ENCODE measurements at regions of chr15 and their contacts with region 1.

Region 1: GRCh38 chr15:99565299-99566156 is at the start of gene MEF2A:
- DNase-seq: peak; percentile 86 to 94 (median 91)
- ATAC-seq: peak; percentile 86
- H3K4me3 ChIP-seq: peak within 1 kb of the TSS; percentile 100
- H3K4me3 Mint-ChIP-seq: peak within 1 kb of the TSS; percentile 96 to 100 (median 98)
- H3K27ac ChIP-seq: peak within 1 kb of the TSS; percentile 81
- H3K27ac Mint-ChIP-seq: peak within 1 kb of the TSS; percentile 93 to 99 (median 97)
- H3K4me1 ChIP-seq: peaks cover 8 to 24% of the 10 kb centered on the region in 2 donors
- H3K4me1 Mint-ChIP-seq: peaks cover 32 to 62% (median 55%) of the 10 kb centered on the region in 7 donors
- H3K27me3 ChIP-seq: no peaks in the 10 kb centered on the region
- H3K27me3 Mint-ChIP-seq: peaks cover 0 to 5% (median 0%) of the 10 kb centered on the region in 5 donors
- total RNA-seq, gene MEF2A: 24.2 to 42.8 (median 38.5) TPM

Region 2: DNA sequence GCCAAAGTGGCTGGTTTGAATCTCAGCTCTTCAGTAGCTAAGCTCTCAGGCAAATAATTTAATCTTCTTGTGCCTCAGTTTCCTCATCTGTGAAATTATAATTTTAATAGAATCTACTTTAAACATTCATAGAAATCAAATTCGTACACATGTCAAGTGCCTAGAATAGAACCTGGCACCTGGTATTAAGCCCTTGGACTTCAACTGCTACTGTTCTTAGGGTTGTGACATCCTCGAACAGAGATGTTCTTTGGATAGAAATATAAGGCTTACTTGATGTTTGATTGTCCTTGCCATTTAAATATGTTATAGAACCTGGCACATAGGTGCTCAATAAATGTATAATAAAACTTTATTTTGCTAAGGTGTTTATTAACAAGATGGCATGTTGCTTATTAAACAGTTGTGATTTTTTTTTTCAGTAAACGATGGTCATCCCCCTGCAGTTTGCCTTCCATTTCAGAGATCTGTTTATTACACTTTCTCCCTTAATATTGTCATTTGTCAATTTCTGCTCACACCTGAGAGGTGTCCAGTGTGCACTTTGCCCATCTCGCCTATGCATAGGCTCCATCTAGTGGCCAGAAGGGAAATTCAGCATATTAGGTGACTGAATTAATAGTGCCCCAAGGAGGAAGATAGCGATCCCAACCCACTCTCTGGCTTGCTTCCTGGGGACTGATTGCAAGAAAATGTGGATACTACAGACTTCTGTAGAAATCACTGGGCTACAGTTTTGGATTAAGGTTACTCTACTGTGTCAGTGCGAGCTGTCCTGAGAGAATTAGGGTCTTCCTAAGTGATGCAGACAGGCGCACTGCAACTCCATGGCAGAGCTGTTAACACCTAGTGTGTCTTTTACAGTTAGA is 906.5 kb before region 1 on chr15:
- CTCF ChIA-PET with region 1: no interaction called
- POLR2A ChIA-PET with region 1: no interaction called
- intact Hi-C with region 1: loop called in 1 of 2 experiments (anchors 10 kb)
- DNase-seq: peak in 7 of 9 donors; percentile 24 to 56 (median 49)
- ATAC-seq: peak; percentile 85
- H3K4me3 ChIP-seq: no peak overlapping the region
- H3K4me3 Mint-ChIP-seq: no peak overlapping the region
- H3K27ac ChIP-seq: no peak overlapping the region
- H3K27ac Mint-ChIP-seq: peak overlapping the region in 2 of 9 donors; percentile 43 to 73
- H3K4me1 ChIP-seq: peaks cover 0 to 23% of the 10 kb centered on the region in 2 donors
- H3K4me1 Mint-ChIP-seq: peaks cover 15 to 79% (median 71%) of the 10 kb centered on the region in 7 donors
- H3K27me3 ChIP-seq: no peaks in the 10 kb centered on the region
- H3K27me3 Mint-ChIP-seq: peaks cover 0 to 6% (median 0%) of the 10 kb centered on the region in 5 donors

Region 3: GRCh38 chr15:99343881-99344551 is 221.5 kb before region 1 on chr15:
- CTCF ChIA-PET with region 1: no interaction called
- POLR2A ChIA-PET with region 1: interaction called, 3 read pairs
- intact Hi-C with region 1: loop called in 1 of 2 experiments (anchors 5 kb)
- DNase-seq: peak; percentile 9 to 68 (median 57)
- ATAC-seq: peak; percentile 73
- H3K4me3 ChIP-seq: no peak overlapping the region
- H3K4me3 Mint-ChIP-seq: no peak overlapping the region
- H3K27ac ChIP-seq: no peak overlapping the region
- H3K27ac Mint-ChIP-seq: peak overlapping the region in 2 of 9 donors; percentile 8 to 61
- H3K4me1 ChIP-seq: no peaks in the 10 kb centered on the region
- H3K4me1 Mint-ChIP-seq: peaks cover 0 to 8% (median 6%) of the 10 kb centered on the region in 7 donors
- H3K27me3 ChIP-seq: no peaks in the 10 kb centered on the region
- H3K27me3 Mint-ChIP-seq: no peaks in the 10 kb centered on the region

Region 4: DNA sequence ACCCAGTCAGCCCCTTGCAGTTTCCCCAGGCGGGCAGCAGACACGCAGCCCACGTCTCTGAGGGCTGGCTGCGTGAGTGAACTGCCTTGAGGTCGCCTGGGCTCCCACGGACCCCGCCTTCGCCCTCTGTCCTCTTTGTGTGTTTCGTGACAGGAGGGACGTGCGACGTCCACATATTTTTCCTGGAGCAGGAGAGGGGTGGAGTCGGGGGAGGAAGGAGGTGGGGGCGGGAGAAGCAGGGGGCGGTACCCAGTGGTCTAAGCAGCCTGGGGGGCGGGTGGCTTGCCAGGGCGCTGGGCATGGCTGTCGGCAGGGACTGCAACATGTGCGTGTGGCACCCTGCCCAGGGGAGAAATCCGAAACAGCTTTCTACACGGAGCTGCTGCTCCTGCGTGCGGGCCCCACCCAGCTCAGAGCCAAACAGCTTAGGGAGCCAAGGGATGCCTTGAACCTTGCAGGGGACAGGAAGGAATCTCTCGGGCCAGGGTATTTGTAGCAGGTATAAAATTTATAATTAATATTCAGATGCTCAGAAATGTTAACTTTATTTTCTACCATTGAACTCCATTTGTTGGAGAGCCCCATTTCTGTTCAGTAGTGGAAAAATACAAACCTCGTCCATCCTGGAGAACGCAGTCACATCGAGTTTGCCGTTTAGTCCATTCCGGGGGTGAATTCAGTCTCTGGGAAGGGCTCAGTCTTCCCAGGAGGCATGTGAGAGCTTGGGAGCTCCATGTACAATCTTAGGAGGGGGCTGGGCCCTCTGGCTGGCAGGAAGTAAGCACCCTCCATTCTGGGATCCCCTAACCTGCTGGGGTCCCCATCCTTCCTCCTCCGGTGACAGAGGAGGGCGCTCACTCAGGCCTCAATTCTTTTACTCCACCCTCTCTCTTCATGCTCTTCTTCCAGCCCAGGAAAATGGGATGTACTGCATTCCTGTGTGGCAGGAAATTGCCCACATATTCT is 78.9 kb before region 1 on chr15:
- CTCF ChIA-PET with region 1: no interaction called
- POLR2A ChIA-PET with region 1: interaction called, 5 read pairs
- intact Hi-C with region 1: loop called in 1 of 2 experiments (anchors 5 kb)
- DNase-seq: peak in 1 of 9 donors; percentile 20
- ATAC-seq: peak; percentile 38
- H3K4me3 ChIP-seq: no peak overlapping the region
- H3K4me3 Mint-ChIP-seq: peak overlapping the region; percentile 76 to 92 (median 85)
- H3K27ac ChIP-seq: no peak overlapping the region
- H3K27ac Mint-ChIP-seq: peak overlapping the region in 7 of 9 donors; percentile 63 to 87 (median 76)
- H3K4me1 ChIP-seq: peaks cover 0 to 16% of the 10 kb centered on the region in 2 donors
- H3K4me1 Mint-ChIP-seq: peaks cover 19 to 33% (median 22%) of the 10 kb centered on the region in 7 donors
- H3K27me3 ChIP-seq: peaks cover 0 to 7% of the 10 kb centered on the region in 2 donors
- H3K27me3 Mint-ChIP-seq: peaks cover 0 to 24% (median 5%) of the 10 kb centered on the region in 5 donors

Region 5: GRCh38 chr15:99662903-99663302 is 97.4 kb after region 1 on chr15:
- CTCF ChIA-PET with region 1: no interaction called
- POLR2A ChIA-PET with region 1: interaction called, 14 read pairs
- intact Hi-C with region 1: no loop called
- DNase-seq: no peak
- ATAC-seq: no peak
- H3K4me3 ChIP-seq: no peak overlapping the region
- H3K4me3 Mint-ChIP-seq: no peak overlapping the region
- H3K27ac ChIP-seq: no peak overlapping the region
- H3K27ac Mint-ChIP-seq: no peak overlapping the region
- H3K4me1 ChIP-seq: peaks cover 0 to under 1% of the 10 kb centered on the region in 2 donors
- H3K4me1 Mint-ChIP-seq: peaks cover 4 to 19% (median 6%) of the 10 kb centered on the region in 7 donors
- H3K27me3 ChIP-seq: no peaks in the 10 kb centered on the region
- H3K27me3 Mint-ChIP-seq: no peaks in the 10 kb centered on the region

Region 6: GRCh38 chr15:99928429-99928981 is 363.0 kb after region 1 on chr15:
- CTCF ChIA-PET with region 1: no interaction called
- POLR2A ChIA-PET with region 1: no interaction called
- intact Hi-C with region 1: loop called in 1 of 2 experiments (anchors 5 kb)
- DNase-seq: peak; percentile 68 to 93 (median 91)
- ATAC-seq: peak; percentile 97
- H3K4me3 ChIP-seq: peak overlapping the region; percentile 56
- H3K4me3 Mint-ChIP-seq: peak overlapping the region; percentile 79 to 92 (median 88)
- H3K27ac ChIP-seq: peak overlapping the region; percentile 76
- H3K27ac Mint-ChIP-seq: peak overlapping the region; percentile 80 to 95 (median 89)
- H3K4me1 ChIP-seq: peaks cover 12 to 17% of the 10 kb centered on the region in 2 donors
- H3K4me1 Mint-ChIP-seq: peaks cover 13 to 28% (median 19%) of the 10 kb centered on the region in 7 donors
- H3K27me3 ChIP-seq: no peaks in the 10 kb centered on the region
- H3K27me3 Mint-ChIP-seq: peaks cover 0 to 27% (median 0%) of the 10 kb centered on the region in 5 donors